Endothelial cell of umbilical vein (primary cell): ENCODE measurements at regions of chr14 and their contacts with region 1.

Region 1: DNA sequence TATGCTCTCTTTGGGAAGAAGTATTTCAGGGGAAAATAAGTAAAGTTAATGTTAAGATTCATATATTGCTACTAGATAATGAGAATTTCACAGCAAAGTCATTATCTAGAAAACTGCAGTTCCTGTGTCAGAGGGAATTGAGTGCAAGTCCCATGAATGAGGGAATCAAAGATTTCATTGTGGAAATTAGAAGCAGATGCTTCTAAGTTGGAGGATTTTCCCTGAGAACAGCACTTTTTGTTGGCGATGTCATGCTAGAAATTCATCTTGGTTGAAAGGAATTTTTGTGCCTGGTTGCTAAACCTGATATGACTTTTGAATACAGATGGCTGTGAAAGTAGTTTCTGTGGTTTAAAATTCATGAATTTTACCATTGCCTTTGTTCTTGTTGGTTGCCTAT is 25.6 kb downstream of the FRMD6 start:
- DNase-seq: no peak
- H3K4me3 ChIP-seq: no peak overlapping the region
- H3K27ac ChIP-seq: no peak overlapping the region
- H3K4me1 ChIP-seq: no peaks in the 10 kb centered on the region
- H3K27me3 ChIP-seq: no peaks in the 10 kb centered on the region
- CTCF ChIP-seq: no peak
- POLR2A ChIP-seq: no peak

Region 2: DNA sequence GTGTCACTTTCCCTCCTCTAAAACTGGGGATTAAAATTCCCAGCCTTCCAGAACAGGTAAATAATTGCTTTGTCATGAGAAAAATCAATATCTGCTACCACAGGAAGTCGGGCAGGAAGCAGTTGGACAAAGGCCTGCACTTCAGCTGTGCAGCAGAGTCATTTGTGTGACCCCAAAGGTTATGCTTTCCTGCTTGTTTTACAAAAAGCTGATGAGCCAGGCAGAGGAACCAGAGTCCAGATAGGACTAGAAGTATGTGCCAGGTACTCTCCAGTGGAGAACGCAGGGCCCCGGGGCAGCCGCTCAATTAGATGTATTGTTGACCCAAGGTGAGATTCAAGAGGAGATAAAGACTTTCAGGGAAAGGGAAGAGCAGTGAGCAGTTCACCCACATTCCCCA is 142.6 kb before region 1 on chr14:
- CTCF ChIA-PET with region 1: no interaction called
- POLR2A ChIA-PET with region 1: no interaction called
- dilution Hi-C with region 1: no loop called
- intact Hi-C with region 1: no loop called
- DNase-seq: peak; percentile 86
- H3K4me3 ChIP-seq: no peak overlapping the region
- H3K27ac ChIP-seq: peak overlapping the region; percentile 78
- H3K4me1 ChIP-seq: peaks cover 36% of the 10 kb centered on the region
- H3K27me3 ChIP-seq: no peaks in the 10 kb centered on the region
- CTCF ChIP-seq: no peak
- POLR2A ChIP-seq: no peak

Region 3: DNA sequence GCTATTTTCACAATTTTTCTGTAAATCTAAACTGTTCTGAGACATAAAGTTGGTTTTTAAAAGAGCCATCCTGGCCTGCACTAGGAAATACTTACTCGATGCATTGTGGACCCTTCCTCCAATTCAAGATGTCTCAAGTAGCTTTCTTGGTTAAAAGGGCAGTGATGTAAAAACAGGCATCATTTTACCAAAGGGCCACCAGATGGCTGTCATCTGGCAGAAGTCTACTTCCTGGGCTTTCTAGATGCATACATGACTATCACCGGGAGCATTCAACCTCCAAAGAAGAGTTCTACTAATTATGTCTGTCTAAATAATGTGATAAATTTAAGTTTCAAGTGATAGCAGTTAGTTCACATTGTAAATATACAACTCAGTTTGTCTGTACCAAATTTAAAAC is 122.3 kb before region 1 on chr14:
- CTCF ChIA-PET with region 1: no interaction called
- POLR2A ChIA-PET with region 1: no interaction called
- dilution Hi-C with region 1: no loop called
- intact Hi-C with region 1: no loop called
- DNase-seq: no peak
- H3K4me3 ChIP-seq: no peak overlapping the region
- H3K27ac ChIP-seq: peak overlapping the region; percentile 59
- H3K4me1 ChIP-seq: peaks cover 20% of the 10 kb centered on the region
- H3K27me3 ChIP-seq: no peaks in the 10 kb centered on the region
- CTCF ChIP-seq: no peak
- POLR2A ChIP-seq: no peak

Region 4: GRCh38 chr14:51657762-51658161 is 19.5 kb before region 1 on chr14:
- CTCF ChIA-PET with region 1: interaction called, 3 read pairs
- POLR2A ChIA-PET with region 1: no interaction called
- dilution Hi-C with region 1: no loop called
- intact Hi-C with region 1: loop called (anchors 2 kb)
- DNase-seq: no peak
- H3K4me3 ChIP-seq: no peak overlapping the region
- H3K27ac ChIP-seq: no peak overlapping the region
- H3K4me1 ChIP-seq: peaks cover 39% of the 10 kb centered on the region
- H3K27me3 ChIP-seq: no peaks in the 10 kb centered on the region
- CTCF ChIP-seq: no peak
- POLR2A ChIP-seq: no peak